Activated B cell treated with CpG ODN at 0.5 μM for 24 hours (primary cell): ENCODE measurements at regions of chr11 and their contacts with region 1.

Region 1: GRCh38 chr11:71928737-71929452 is at the start of gene RNF121:
- DNase-seq: peak; percentile 90
- ATAC-seq: peak; percentile 88
- H3K4me3 Mint-ChIP-seq: peak within 1 kb of the TSS; percentile 95
- H3K27ac Mint-ChIP-seq: peak within 1 kb of the TSS; percentile 98
- H3K4me1 Mint-ChIP-seq: peaks cover 58% of the 10 kb centered on the region
- H3K27me3 Mint-ChIP-seq: no peaks in the 10 kb centered on the region
- CTCF ChIP-seq: no peak
- total RNA-seq, gene RNF121: 44.4 and 47.4 TPM in 2 replicates

Region 2: DNA sequence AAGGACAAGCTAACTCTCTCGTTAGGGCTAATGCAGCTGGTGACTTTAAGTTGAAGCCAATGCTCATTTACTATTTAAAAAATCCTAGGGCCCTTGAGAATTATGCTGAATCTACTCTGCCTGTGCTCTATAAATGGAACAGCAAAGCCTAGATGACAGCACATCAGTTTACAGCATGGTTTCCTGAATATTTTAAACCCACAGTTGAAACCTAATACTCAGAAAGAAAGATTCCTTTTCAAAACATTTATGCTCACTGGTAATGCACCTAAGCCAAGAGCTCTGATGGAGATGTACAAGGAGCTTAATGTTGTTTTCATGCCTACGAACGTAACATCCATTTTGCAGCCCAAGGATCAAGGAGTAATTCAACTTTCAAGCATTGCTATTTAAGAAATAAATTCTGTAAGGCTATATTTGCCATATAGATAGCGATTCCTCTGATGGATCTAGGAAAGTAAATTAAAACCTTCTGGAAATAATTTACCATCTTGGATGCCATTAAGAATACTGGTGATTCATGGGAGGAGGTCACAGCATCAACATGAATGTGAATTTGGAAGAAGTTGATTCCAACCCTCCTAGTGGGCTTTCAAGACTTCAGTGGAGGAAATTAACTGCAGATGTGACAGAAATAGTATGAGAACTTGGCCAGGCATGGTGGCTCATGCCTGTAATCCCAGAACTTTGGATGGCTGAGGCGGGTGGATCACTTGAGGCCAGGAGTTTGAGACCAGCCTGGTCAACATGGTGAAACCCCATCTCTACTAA is 15.0 kb before region 1 on chr11:
- CTCF ChIA-PET with region 1: interaction called, 4 read pairs
- POLR2A ChIA-PET with region 1: interaction called, 10 read pairs
- intact Hi-C with region 1: no loop called
- DNase-seq: no peak
- ATAC-seq: no peak
- H3K4me3 Mint-ChIP-seq: no peak overlapping the region
- H3K27ac Mint-ChIP-seq: no peak overlapping the region
- H3K4me1 Mint-ChIP-seq: peaks cover 8% of the 10 kb centered on the region
- H3K27me3 Mint-ChIP-seq: no peaks in the 10 kb centered on the region
- CTCF ChIP-seq: no peak

Region 3: DNA sequence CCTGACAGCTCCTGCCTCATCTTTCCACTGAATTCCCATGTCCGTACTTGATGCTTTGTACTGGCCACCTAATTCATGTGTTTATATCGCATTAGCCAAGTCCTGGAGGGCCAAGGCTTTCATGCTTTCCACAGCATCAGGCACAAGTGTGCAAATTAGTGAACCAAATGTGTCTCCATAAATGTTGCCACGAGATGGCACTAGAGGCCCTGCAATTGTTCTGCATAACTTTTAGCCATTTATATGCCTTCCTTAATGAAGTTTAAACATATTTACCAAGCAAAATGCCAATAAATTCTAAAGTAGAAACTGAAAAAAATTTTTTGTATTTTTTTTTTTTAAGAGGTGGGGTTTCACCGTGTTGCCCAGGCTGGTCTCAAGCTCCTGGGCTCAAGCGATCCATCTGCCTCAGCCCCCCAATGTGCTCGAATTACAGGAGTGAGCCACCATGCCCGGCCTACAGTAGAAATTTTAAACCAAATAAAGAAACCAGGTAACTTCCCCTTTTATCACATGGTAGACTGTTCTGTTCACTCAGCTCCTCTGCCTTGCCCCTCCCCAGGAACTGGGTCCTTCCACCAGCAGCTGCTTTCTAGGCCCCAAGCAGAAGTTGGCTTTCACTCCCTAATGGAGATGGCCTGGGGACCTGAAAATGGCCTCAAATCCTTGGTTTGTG is 49.0 kb after region 1 on chr11:
- CTCF ChIA-PET with region 1: interaction called, 4 read pairs
- POLR2A ChIA-PET with region 1: interaction called, 17 read pairs
- intact Hi-C with region 1: no loop called
- DNase-seq: no peak
- ATAC-seq: peak; percentile 96
- H3K4me3 Mint-ChIP-seq: no peak overlapping the region
- H3K27ac Mint-ChIP-seq: peak overlapping the region; percentile 91
- H3K4me1 Mint-ChIP-seq: peaks cover 16% of the 10 kb centered on the region
- H3K27me3 Mint-ChIP-seq: no peaks in the 10 kb centered on the region
- CTCF ChIP-seq: peak; percentile 26

Region 4: GRCh38 chr11:72040726-72041441 is 112.0 kb after region 1 on chr11:
- CTCF ChIA-PET with region 1: no interaction called
- POLR2A ChIA-PET with region 1: interaction called, 18 read pairs
- intact Hi-C with region 1: no loop called
- DNase-seq: peak; percentile 49
- ATAC-seq: peak; percentile 48
- H3K4me3 Mint-ChIP-seq: no peak overlapping the region
- H3K27ac Mint-ChIP-seq: no peak overlapping the region
- H3K4me1 Mint-ChIP-seq: peaks cover 2% of the 10 kb centered on the region
- H3K27me3 Mint-ChIP-seq: no peaks in the 10 kb centered on the region
- CTCF ChIP-seq: no peak

Region 5: GRCh38 chr11:72112321-72113219 is 183.7 kb after region 1 on chr11 and contains the start of gene ANAPC15:
- CTCF ChIA-PET with region 1: no interaction called
- POLR2A ChIA-PET with region 1: interaction called, 24 read pairs
- intact Hi-C with region 1: loop called (anchors 1 kb)
- DNase-seq: peak; percentile 90
- ATAC-seq: peak; percentile 90
- H3K4me3 Mint-ChIP-seq: peak within 1 kb of the TSS; percentile 97
- H3K27ac Mint-ChIP-seq: peak within 1 kb of the TSS; percentile 100
- H3K4me1 Mint-ChIP-seq: peaks cover 25% of the 10 kb centered on the region
- H3K27me3 Mint-ChIP-seq: peaks cover 13% of the 10 kb centered on the region
- CTCF ChIP-seq: no peak
- total RNA-seq, gene ANAPC15: 44.4 and 56.3 TPM in 2 replicates

Region 6: GRCh38 chr11:72216638-72217037 is 287.7 kb after region 1 on chr11 and contains the start of gene FOLR2:
- CTCF ChIA-PET with region 1: no interaction called
- POLR2A ChIA-PET with region 1: no interaction called
- intact Hi-C with region 1: no loop called
- DNase-seq: no peak
- ATAC-seq: no peak
- H3K4me3 Mint-ChIP-seq: no peak within 1 kb of the TSS
- H3K27ac Mint-ChIP-seq: no peak within 1 kb of the TSS
- H3K4me1 Mint-ChIP-seq: peaks cover 37% of the 10 kb centered on the region
- H3K27me3 Mint-ChIP-seq: no peaks in the 10 kb centered on the region
- CTCF ChIP-seq: no peak
- total RNA-seq, gene FOLR2: 0.67 and 0.76 TPM in 2 replicates